ENCODE measurements at regions of chr19 and their contacts with region 1.

Region 1: GRCh38 chr19:39412100-39412866 is at the start of gene PLEKHG2:
- DNase-seq: peak; percentile 99
- H3K4me3 ChIP-seq: peak within 1 kb of the TSS; percentile 88
- H3K4me3 Mint-ChIP-seq: peak within 1 kb of the TSS; percentile 77
- H3K27ac Mint-ChIP-seq: peak within 1 kb of the TSS; percentile 90
- H3K4me1 ChIP-seq: peaks cover 30% of the 10 kb centered on the region
- H3K4me1 Mint-ChIP-seq: peaks cover 40% of the 10 kb centered on the region
- H3K27me3 ChIP-seq: no peaks in the 10 kb centered on the region
- H3K27me3 Mint-ChIP-seq: peaks cover 3% of the 10 kb centered on the region
- CTCF ChIP-seq: peak; percentile 91 to 92
- total RNA-seq, gene PLEKHG2: 49.8 and 64.1 TPM in 2 replicates

Region 2: GRCh38 chr19:39397360-39398296 is 14.7 kb before region 1 on chr19:
- CTCF ChIA-PET with region 1: interaction called, 52 read pairs
- POLR2A ChIA-PET with region 1: interaction called, 27 read pairs
- intact Hi-C with region 1: loop called (anchors 1 kb)
- DNase-seq: peak; percentile 94 to 95
- H3K4me3 ChIP-seq: no peak overlapping the region
- H3K4me3 Mint-ChIP-seq: peak overlapping the region; percentile 49
- H3K27ac Mint-ChIP-seq: peak overlapping the region; percentile 84
- H3K4me1 ChIP-seq: peaks cover 52% of the 10 kb centered on the region
- H3K4me1 Mint-ChIP-seq: peaks cover 34% of the 10 kb centered on the region
- H3K27me3 ChIP-seq: no peaks in the 10 kb centered on the region
- H3K27me3 Mint-ChIP-seq: no peaks in the 10 kb centered on the region
- CTCF ChIP-seq: peak; percentile 98

Region 3: GRCh38 chr19:39428283-39429112 is 16.2 kb after region 1 on chr19:
- CTCF ChIA-PET with region 1: interaction called, 5 read pairs
- POLR2A ChIA-PET with region 1: interaction called, 7 read pairs
- intact Hi-C with region 1: loop called (anchors 1 kb)
- DNase-seq: peak; percentile 79 to 90
- H3K4me3 ChIP-seq: no peak overlapping the region
- H3K4me3 Mint-ChIP-seq: peak overlapping the region; percentile 51
- H3K27ac Mint-ChIP-seq: peak overlapping the region; percentile 79
- H3K4me1 ChIP-seq: peaks cover 27% of the 10 kb centered on the region
- H3K4me1 Mint-ChIP-seq: no peaks in the 10 kb centered on the region
- H3K27me3 ChIP-seq: no peaks in the 10 kb centered on the region
- H3K27me3 Mint-ChIP-seq: no peaks in the 10 kb centered on the region
- CTCF ChIP-seq: no peak